Common myeloid progenitor, CD34-positive (primary cell): ENCODE measurements at regions of chr12 and their contacts with region 1.

Region 1: DNA sequence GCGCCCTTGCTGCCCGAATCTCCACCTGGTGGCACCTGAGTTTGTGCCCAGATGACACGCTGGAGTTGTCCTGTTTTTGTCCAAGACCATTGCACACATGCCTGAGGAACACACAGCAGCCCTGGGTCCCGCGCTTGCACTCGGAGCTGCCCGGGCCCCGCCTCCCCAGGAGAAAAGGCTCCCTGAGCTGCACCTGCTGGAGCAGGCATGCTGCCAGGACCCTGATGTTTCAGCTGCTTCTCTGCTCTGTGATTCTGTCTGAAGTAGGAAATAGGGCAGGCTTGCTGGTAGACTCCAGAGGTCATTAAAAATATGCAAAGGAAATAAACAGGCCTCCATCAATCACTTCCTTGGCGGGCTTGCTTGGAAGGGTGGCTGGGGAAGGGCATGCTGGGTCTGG is 271.6 kb downstream of the CACNA1C start:
- DNase-seq: peak; percentile 66 to 90 (median 90)
- H3K4me3 ChIP-seq: peak overlapping the region in 1 of 7 experiments; percentile 5
- H3K27ac ChIP-seq: no peak overlapping the region
- H3K4me1 ChIP-seq: peaks cover 4 to 40% (median 37%) of the 10 kb centered on the region in 4 experiments
- H3K27me3 ChIP-seq: no peaks in the 10 kb centered on the region

Region 2: DNA sequence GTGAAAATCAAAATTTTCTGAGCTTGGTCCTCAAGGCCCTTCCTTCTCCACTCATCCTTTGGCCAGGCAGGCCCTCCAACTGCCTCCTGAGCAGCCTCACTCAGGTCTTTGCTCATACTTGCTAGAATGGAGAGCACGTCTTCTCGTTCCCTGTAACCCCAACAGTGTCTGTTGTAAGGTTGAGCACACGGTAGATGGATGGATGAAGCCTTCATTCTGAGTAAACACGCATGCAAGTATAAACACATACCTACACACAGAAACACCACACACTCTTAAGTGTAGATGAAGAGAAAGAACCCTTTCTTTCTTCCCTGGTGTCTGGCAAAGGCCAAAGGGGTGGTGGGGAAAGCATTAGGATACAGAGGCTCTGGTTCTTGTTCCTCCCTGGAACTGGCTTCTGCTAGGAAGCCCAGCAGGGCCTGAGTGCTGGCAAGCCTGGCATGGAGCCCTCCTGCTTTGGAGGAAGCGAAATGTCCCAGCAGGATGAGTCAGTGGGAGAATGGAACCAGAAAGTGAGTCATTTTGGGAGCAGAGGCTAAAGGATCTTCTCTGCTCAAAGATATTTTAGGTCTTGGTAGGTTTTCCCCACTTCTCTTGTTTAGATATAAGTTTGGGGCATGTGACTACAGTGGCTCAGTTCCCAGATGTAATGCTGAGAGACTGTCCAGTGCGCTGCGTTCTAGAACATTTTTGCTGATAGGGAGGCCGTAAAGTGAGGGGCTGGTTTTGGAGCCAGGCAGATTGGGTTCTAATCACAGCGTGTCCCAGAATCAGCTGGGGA is 144.2 kb before region 1 on chr12:
- CTCF ChIA-PET with region 1: no interaction called
- POLR2A ChIA-PET with region 1: no interaction called
- DNase-seq: no peak
- H3K4me3 ChIP-seq: no peak overlapping the region
- H3K27ac ChIP-seq: no peak overlapping the region
- H3K4me1 ChIP-seq: peaks cover 0 to 24% (median 13%) of the 10 kb centered on the region in 4 experiments
- H3K27me3 ChIP-seq: no peaks in the 10 kb centered on the region

Region 3: DNA sequence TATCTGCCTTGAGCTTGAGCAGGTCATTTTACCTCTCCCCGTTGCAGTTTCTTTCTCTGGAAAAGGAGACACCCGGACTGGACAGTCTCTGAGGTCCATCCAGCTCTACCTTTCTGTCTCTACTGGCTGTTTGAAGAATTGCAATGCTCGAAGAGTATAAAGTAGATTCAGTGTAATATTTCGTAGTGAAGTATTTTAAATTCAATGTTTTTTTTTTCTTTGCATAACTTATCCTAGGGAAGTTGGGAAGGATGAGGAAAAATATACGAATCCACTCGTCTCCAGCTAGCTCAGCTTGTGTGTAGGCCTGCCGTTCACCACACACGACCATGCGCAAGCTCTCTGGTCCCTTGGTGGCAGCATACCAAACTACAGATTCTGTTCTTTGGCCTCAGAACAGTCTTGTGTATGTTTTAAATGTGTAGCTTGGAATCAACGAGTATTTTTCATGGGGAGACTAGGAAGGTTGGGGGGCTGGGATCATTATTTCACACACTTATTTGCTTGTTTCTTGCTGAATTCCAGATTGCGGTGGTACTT is 36.3 kb after region 1 on chr12:
- CTCF ChIA-PET with region 1: interaction called, 14 read pairs
- POLR2A ChIA-PET with region 1: no interaction called
- DNase-seq: no peak
- H3K4me3 ChIP-seq: no peak overlapping the region
- H3K27ac ChIP-seq: no peak overlapping the region
- H3K4me1 ChIP-seq: peaks cover 22 to 98% (median 70%) of the 10 kb centered on the region in 4 experiments
- H3K27me3 ChIP-seq: no peaks in the 10 kb centered on the region